ENCODE measurements at regions of chr7 and their contacts with region 1.

Region 1: GRCh38 chr7:116511552-116512519 is 12.3 kb downstream of the CAV2 start:
- DNase-seq: peak in 1 of 3 donors; percentile 56
- ATAC-seq: peak; percentile 89 to 94
- H3K4me3 ChIP-seq: peak overlapping the region; percentile 56
- H3K27ac ChIP-seq: peak overlapping the region; percentile 90
- H3K4me1 ChIP-seq: no peaks in the 10 kb centered on the region
- H3K27me3 ChIP-seq: no peaks in the 10 kb centered on the region

Region 2: GRCh38 chr7:116258734-116259133 is 253.1 kb before region 1 on chr7:
- intact Hi-C with region 1: loop called in 1 of 4 experiments (anchors 10 kb)
- DNase-seq: no peak
- ATAC-seq: peak; percentile 54 to 59
- H3K4me3 ChIP-seq: no peak overlapping the region
- H3K27ac ChIP-seq: no peak overlapping the region
- H3K4me1 ChIP-seq: no peaks in the 10 kb centered on the region
- H3K27me3 ChIP-seq: no peaks in the 10 kb centered on the region